BJ (cell line): ENCODE measurements at regions of chr13 and their contacts with region 1.

Region 1: GRCh38 chr13:35789335-35790165 is 313.1 kb upstream of the MAB21L1 start:
- DNase-seq: no peak
- H3K4me3 ChIP-seq: no peak overlapping the region
- H3K27me3 ChIP-seq: no peaks in the 10 kb centered on the region
- CTCF ChIP-seq: peak; percentile 60

Region 2: GRCh38 chr13:35771898-35772297 is 17.7 kb before region 1 on chr13:
- CTCF ChIA-PET with region 1: interaction called, 13 read pairs
- POLR2A ChIA-PET with region 1: interaction called, 3 read pairs
- DNase-seq: peak; percentile 88
- H3K4me3 ChIP-seq: no peak overlapping the region
- H3K27me3 ChIP-seq: no peaks in the 10 kb centered on the region
- CTCF ChIP-seq: no peak